WTC11 (cell line): ENCODE measurements at regions of chr1 and their contacts with region 1.

Region 1: DNA sequence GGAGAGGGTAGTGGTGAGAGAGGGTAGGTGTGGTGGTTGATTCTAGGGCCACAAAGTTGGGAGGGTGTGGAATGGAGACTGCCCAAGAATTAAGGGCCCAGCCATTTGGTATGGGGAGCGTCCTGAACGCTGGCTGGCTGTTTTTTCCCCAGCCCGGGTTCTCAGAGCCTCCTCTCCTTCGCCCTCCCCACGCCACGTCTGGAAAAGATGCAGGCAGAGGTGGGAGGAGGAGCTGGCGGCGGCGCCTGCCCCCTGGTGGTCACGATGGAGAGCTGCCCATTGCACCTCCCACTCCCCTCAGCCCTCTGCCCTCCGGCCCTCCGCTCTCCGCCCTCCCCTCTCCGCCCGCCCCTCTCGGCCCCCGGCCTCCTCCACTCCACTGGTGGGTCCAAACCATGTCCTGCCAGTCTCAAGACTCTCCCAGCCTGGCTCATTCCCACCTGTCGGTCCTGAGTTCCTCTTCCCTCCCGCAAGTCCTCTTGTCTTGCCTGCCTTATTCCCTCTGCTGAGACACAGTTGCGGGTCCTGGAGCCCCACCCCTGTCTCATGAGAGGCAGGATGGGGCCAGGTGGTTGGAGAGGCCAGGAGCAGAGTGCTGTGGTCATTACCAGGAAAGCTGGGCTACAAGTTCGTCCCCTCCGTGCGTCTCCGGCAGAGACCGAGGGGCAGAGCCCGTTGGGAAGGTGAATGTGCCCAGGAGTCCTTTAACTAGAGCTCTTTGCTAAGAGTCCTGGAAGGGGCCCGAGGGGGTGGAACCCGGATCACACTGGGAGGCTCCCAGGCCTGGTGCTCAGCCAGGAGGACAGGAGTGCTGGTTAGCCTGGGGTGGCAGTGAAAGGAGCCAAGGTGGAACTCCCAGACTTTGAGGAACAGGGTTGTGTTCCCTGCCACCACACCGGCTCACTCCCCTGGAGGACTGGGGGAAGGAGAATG is 22.6 kb downstream of the ETNK2 start:
- DNase-seq: peak; percentile 77
- ATAC-seq: peak; percentile 80
- H3K4me3 Mint-ChIP-seq: peak overlapping the region; percentile 57
- H3K27ac Mint-ChIP-seq: peak overlapping the region; percentile 85
- H3K4me1 Mint-ChIP-seq: peaks cover 47% of the 10 kb centered on the region
- H3K27me3 Mint-ChIP-seq: no peaks in the 10 kb centered on the region
- CTCF ChIP-seq: peak; percentile 97

Region 2: GRCh38 chr1:203871107-203871875 is 257.9 kb before region 1 on chr1:
- CTCF ChIA-PET with region 1: interaction called, 183 read pairs
- POLR2A ChIA-PET with region 1: interaction called, 13 read pairs
- DNase-seq: peak; percentile 24
- ATAC-seq: peak; percentile 84
- H3K4me3 Mint-ChIP-seq: no peak overlapping the region
- H3K27ac Mint-ChIP-seq: peak overlapping the region; percentile 70; the same call in 1 of the 2 replicates
- H3K4me1 Mint-ChIP-seq: peaks cover 7% of the 10 kb centered on the region
- H3K27me3 Mint-ChIP-seq: no peaks in the 10 kb centered on the region
- CTCF ChIP-seq: peak; percentile 50; the same call in 1 of the 2 replicates

Region 3: DNA sequence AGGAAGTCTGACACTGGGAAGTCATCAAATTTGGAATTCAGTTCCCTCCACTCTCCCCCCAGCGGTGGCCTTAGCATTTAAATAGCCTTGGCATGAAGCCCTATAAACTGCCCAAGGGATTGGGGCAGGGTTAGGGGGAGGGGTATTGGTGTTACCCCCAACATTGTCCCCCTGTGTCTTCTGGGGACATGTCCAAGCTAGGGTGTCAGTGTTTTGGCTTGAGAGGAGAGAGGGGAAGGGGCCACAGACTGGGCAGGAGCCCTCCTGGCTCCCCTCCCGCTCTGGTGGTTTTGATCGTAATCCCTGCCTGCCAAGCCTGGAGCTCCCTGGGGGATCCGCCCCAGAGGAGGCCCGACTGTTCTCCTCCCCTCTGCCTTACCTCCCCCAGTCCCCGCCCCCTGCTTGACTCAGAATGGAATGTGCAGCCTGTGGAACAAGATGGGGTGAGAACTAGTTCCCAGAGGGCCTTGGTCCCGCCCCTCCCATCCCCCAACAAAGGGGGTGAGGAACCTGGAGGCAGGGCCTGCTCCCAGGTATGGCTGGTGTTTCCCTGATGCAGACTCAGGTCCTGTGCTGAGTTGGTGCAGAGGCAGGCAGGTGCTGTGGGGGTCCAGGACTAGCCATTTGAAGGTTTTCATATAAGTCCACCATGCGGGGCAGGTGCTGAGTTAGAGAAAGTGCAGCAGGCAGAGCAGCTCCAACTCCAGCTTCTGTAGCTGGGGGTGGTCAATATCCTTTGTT is 48.9 kb before region 1 on chr1:
- CTCF ChIA-PET with region 1: interaction called, 58 read pairs
- POLR2A ChIA-PET with region 1: interaction called, 11 read pairs
- DNase-seq: peak; percentile 98
- ATAC-seq: peak; percentile 74
- H3K4me3 Mint-ChIP-seq: peak overlapping the region; percentile 61
- H3K27ac Mint-ChIP-seq: peak overlapping the region; percentile 100
- H3K4me1 Mint-ChIP-seq: peaks cover 93% of the 10 kb centered on the region
- H3K27me3 Mint-ChIP-seq: peaks cover under 1% of the 10 kb centered on the region; the same call in 1 of the 2 replicates
- CTCF ChIP-seq: no peak

Region 4: GRCh38 chr1:204094856-204095644 is 34.2 kb before region 1 on chr1:
- CTCF ChIA-PET with region 1: interaction called, 17 read pairs
- POLR2A ChIA-PET with region 1: no interaction called
- DNase-seq: no peak
- ATAC-seq: 0 out of 2 replicates have a peak, but pooled peaks have one; percentile 7
- H3K4me3 Mint-ChIP-seq: peak overlapping the region; percentile 31; the same call in 1 of the 2 replicates
- H3K27ac Mint-ChIP-seq: peak overlapping the region; percentile 84
- H3K4me1 Mint-ChIP-seq: peaks cover 76% of the 10 kb centered on the region
- H3K27me3 Mint-ChIP-seq: no peaks in the 10 kb centered on the region
- CTCF ChIP-seq: no peak

Region 5: GRCh38 chr1:204115116-204115515 is 14.1 kb before region 1 on chr1:
- CTCF ChIA-PET with region 1: interaction called, 25 read pairs
- POLR2A ChIA-PET with region 1: no interaction called
- DNase-seq: no peak
- ATAC-seq: no peak
- H3K4me3 Mint-ChIP-seq: no peak overlapping the region
- H3K27ac Mint-ChIP-seq: 0 out of 2 replicates have a peak overlapping the region, but pooled peaks have one; percentile 72
- H3K4me1 Mint-ChIP-seq: peaks cover 32% of the 10 kb centered on the region
- H3K27me3 Mint-ChIP-seq: no peaks in the 10 kb centered on the region
- CTCF ChIP-seq: no peak

Region 6: GRCh38 chr1:204151552-204152309 is 22.5 kb after region 1 on chr1 and contains the start of gene ETNK2:
- CTCF ChIA-PET with region 1: interaction called, 26 read pairs
- POLR2A ChIA-PET with region 1: no interaction called
- DNase-seq: peak; percentile 66
- ATAC-seq: peak; percentile 29
- H3K4me3 Mint-ChIP-seq: peak within 1 kb of the TSS; percentile 73
- H3K27ac Mint-ChIP-seq: no peak within 1 kb of the TSS
- H3K4me1 Mint-ChIP-seq: peaks cover 39% of the 10 kb centered on the region
- H3K27me3 Mint-ChIP-seq: peaks cover 29% of the 10 kb centered on the region
- CTCF ChIP-seq: no peak
- total RNA-seq, gene ETNK2: 18.3 to 20.2 TPM (median 19.7 TPM) in 3 replicates

Region 7: GRCh38 chr1:204889681-204890383 is 760.6 kb after region 1 on chr1:
- CTCF ChIA-PET with region 1: no interaction called
- POLR2A ChIA-PET with region 1: no interaction called
- DNase-seq: no peak
- ATAC-seq: no peak
- H3K4me3 Mint-ChIP-seq: no peak overlapping the region
- H3K27ac Mint-ChIP-seq: no peak overlapping the region
- H3K4me1 Mint-ChIP-seq: peaks cover 21% of the 10 kb centered on the region
- H3K27me3 Mint-ChIP-seq: no peaks in the 10 kb centered on the region; the same call in 1 of the 2 replicates
- CTCF ChIP-seq: no peak